IMR-90 (cell line): ENCODE measurements at regions of chrX and their contacts with region 1.

Region 1: DNA sequence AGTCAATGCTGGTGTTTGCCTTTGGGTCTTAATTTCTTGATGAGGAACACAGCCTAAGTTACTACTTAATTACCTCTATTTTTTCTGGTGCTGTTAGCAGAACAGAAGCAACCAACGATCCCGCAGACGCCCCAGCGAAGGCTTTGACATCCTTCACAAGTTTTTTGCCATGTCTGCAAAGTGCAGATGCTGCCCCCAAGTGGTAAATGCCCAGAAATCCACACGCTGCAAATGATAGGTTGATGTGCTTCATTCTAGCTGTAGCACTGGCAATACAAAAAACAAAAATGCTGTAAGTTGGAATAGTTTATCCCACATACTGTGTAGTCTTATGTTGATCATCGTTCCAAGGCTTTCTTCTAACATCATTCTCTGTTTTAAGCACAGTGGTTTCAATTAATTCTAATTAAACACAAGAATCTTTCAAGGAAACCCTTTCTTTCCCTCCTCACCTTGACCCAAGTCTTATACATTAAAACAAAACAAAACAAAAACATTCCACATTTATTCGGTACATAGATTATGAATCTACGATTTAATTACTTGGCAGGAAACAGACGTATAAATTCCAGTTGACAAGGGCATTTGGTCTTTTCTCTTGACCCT is 1.2 kb downstream of the PNPLA4 start:
- DNase-seq: peak; percentile 63
- ATAC-seq: peak; percentile 73
- H3K4me3 ChIP-seq: no peak overlapping the region
- H3K27ac ChIP-seq: no peak overlapping the region
- H3K4me1 ChIP-seq: no peaks in the 10 kb centered on the region
- H3K27me3 ChIP-seq: no peaks in the 10 kb centered on the region
- CTCF ChIP-seq: peak; percentile 69
- POLR2A ChIP-seq: no peak
- RAD21 ChIP-seq: peak; percentile 76

Region 2: GRCh38 chrX:6021316-6022091 is 1904.5 kb before region 1 on chrX:
- CTCF ChIA-PET with region 1: no interaction called
- POLR2A ChIA-PET with region 1: no interaction called
- dilution Hi-C with region 1: no loop called
- in situ Hi-C with region 1: no loop called
- intact Hi-C with region 1: loop called (anchors 5 kb)
- DNase-seq: peak; percentile 0
- ATAC-seq: no peak
- H3K4me3 ChIP-seq: no peak overlapping the region
- H3K27ac ChIP-seq: no peak overlapping the region
- H3K4me1 ChIP-seq: no peaks in the 10 kb centered on the region
- H3K27me3 ChIP-seq: no peaks in the 10 kb centered on the region
- CTCF ChIP-seq: peak; percentile 35; the same call in 1 of the 2 replicates
- POLR2A ChIP-seq: no peak
- RAD21 ChIP-seq: peak; percentile 40

Region 3: GRCh38 chrX:7074148-7074907 is 851.6 kb before region 1 on chrX:
- CTCF ChIA-PET with region 1: no interaction called
- POLR2A ChIA-PET with region 1: no interaction called
- dilution Hi-C with region 1: no loop called
- in situ Hi-C with region 1: no loop called
- intact Hi-C with region 1: loop called (anchors 10 kb)
- DNase-seq: no peak
- ATAC-seq: no peak
- H3K4me3 ChIP-seq: no peak overlapping the region
- H3K27ac ChIP-seq: no peak overlapping the region
- H3K4me1 ChIP-seq: no peaks in the 10 kb centered on the region
- H3K27me3 ChIP-seq: no peaks in the 10 kb centered on the region
- CTCF ChIP-seq: no peak
- POLR2A ChIP-seq: no peak
- RAD21 ChIP-seq: no peak

Region 4: GRCh38 chrX:7132335-7133049 is 793.5 kb before region 1 on chrX:
- CTCF ChIA-PET with region 1: no interaction called
- POLR2A ChIA-PET with region 1: no interaction called
- dilution Hi-C with region 1: no loop called
- in situ Hi-C with region 1: no loop called
- intact Hi-C with region 1: loop called (anchors 5 kb)
- DNase-seq: peak; percentile 73
- ATAC-seq: peak; percentile 89
- H3K4me3 ChIP-seq: no peak overlapping the region
- H3K27ac ChIP-seq: no peak overlapping the region
- H3K4me1 ChIP-seq: peaks cover 9% of the 10 kb centered on the region
- H3K27me3 ChIP-seq: no peaks in the 10 kb centered on the region
- CTCF ChIP-seq: peak; percentile 65
- POLR2A ChIP-seq: no peak
- RAD21 ChIP-seq: peak; percentile 64

Region 5: GRCh38 chrX:7191681-7192110 is 734.3 kb before region 1 on chrX:
- CTCF ChIA-PET with region 1: no interaction called
- POLR2A ChIA-PET with region 1: no interaction called
- dilution Hi-C with region 1: no loop called
- in situ Hi-C with region 1: no loop called
- intact Hi-C with region 1: loop called (anchors 5 kb)
- DNase-seq: peak; percentile 5
- ATAC-seq: no peak
- H3K4me3 ChIP-seq: no peak overlapping the region
- H3K27ac ChIP-seq: no peak overlapping the region
- H3K4me1 ChIP-seq: no peaks in the 10 kb centered on the region
- H3K27me3 ChIP-seq: no peaks in the 10 kb centered on the region
- CTCF ChIP-seq: peak; percentile 29
- POLR2A ChIP-seq: no peak
- RAD21 ChIP-seq: peak; percentile 27; the same call in 1 of the 2 replicates

Region 6: GRCh38 chrX:7233580-7234406 is 692.2 kb before region 1 on chrX:
- CTCF ChIA-PET with region 1: no interaction called
- POLR2A ChIA-PET with region 1: no interaction called
- dilution Hi-C with region 1: no loop called
- in situ Hi-C with region 1: no loop called
- intact Hi-C with region 1: loop called (anchors 5 kb)
- DNase-seq: no peak
- ATAC-seq: peak; percentile 29
- H3K4me3 ChIP-seq: no peak overlapping the region
- H3K27ac ChIP-seq: no peak overlapping the region
- H3K4me1 ChIP-seq: no peaks in the 10 kb centered on the region
- H3K27me3 ChIP-seq: no peaks in the 10 kb centered on the region
- CTCF ChIP-seq: peak; percentile 24; the same call in 1 of the 2 replicates
- POLR2A ChIP-seq: no peak
- RAD21 ChIP-seq: peak; percentile 24

Region 7: GRCh38 chrX:7654316-7654715 is 271.7 kb before region 1 on chrX:
- CTCF ChIA-PET with region 1: no interaction called
- POLR2A ChIA-PET with region 1: no interaction called
- dilution Hi-C with region 1: no loop called
- in situ Hi-C with region 1: no loop called
- intact Hi-C with region 1: no loop called
- DNase-seq: no peak
- ATAC-seq: no peak
- H3K4me3 ChIP-seq: no peak overlapping the region
- H3K27ac ChIP-seq: no peak overlapping the region
- H3K4me1 ChIP-seq: no peaks in the 10 kb centered on the region
- H3K27me3 ChIP-seq: no peaks in the 10 kb centered on the region
- CTCF ChIP-seq: no peak
- POLR2A ChIP-seq: no peak
- RAD21 ChIP-seq: no peak

Region 8: DNA sequence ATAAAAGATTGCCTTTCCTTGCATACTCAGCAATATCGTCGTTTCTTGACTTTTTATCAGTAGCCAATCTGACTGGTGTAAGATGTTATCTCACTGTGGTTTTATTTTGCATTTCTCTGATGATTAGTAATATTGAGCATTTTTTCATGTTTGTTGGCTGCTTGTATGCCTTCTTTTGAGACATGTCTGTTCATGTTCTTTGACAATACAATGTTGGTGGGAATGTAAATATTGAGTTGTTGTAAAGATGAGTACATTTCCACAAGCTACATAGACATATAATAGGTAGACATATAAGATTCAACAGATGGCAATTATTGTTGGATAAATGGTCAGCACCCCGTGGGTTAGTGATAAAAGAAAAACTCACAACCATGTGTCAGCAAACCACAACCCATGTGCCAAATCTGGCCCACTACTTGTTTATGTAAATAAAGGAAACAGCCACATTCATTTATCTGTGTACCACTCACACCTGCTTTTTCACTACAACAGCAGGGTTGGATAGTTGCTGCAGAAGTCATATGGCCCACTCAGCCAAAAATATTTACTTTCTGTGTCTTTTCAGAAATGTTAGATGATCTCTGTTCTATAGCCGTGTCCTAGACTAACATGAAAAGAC is 236.1 kb before region 1 on chrX:
- CTCF ChIA-PET with region 1: no interaction called
- POLR2A ChIA-PET with region 1: no interaction called
- dilution Hi-C with region 1: no loop called
- in situ Hi-C with region 1: no loop called
- intact Hi-C with region 1: no loop called
- DNase-seq: no peak
- ATAC-seq: no peak
- H3K4me3 ChIP-seq: no peak overlapping the region
- H3K27ac ChIP-seq: no peak overlapping the region
- H3K4me1 ChIP-seq: no peaks in the 10 kb centered on the region
- H3K27me3 ChIP-seq: no peaks in the 10 kb centered on the region
- CTCF ChIP-seq: no peak
- POLR2A ChIP-seq: no peak
- RAD21 ChIP-seq: no peak

Region 9: GRCh38 chrX:7746861-7747260 is 179.1 kb before region 1 on chrX:
- CTCF ChIA-PET with region 1: no interaction called
- POLR2A ChIA-PET with region 1: no interaction called
- dilution Hi-C with region 1: no loop called
- in situ Hi-C with region 1: no loop called
- intact Hi-C with region 1: no loop called
- DNase-seq: no peak
- ATAC-seq: no peak
- H3K4me3 ChIP-seq: no peak overlapping the region
- H3K27ac ChIP-seq: no peak overlapping the region
- H3K4me1 ChIP-seq: no peaks in the 10 kb centered on the region
- H3K27me3 ChIP-seq: no peaks in the 10 kb centered on the region
- CTCF ChIP-seq: no peak
- POLR2A ChIP-seq: no peak
- RAD21 ChIP-seq: no peak

Region 10: DNA sequence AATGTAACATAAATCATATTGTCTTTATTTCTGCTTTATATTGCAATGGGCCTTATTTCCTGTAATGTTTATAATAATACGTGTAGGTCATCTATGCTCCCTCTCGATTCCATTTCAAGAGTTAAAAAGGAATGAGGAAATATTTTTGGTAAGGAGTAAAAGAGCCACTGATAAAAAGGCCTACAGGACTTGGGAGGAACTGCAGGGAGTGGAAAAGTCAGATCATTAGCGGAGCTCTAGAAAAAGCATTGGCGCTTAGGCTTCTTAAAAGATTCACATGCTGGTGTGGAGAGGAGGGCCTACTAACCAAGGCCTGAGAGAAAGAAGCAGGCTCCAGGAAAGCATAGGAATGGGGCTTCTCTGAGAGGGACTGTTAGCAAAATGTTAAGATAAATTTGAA is 84.1 kb after region 1 on chrX:
- CTCF ChIA-PET with region 1: no interaction called
- POLR2A ChIA-PET with region 1: no interaction called
- dilution Hi-C with region 1: no loop called
- in situ Hi-C with region 1: no loop called
- intact Hi-C with region 1: no loop called
- DNase-seq: no peak
- ATAC-seq: no peak
- H3K4me3 ChIP-seq: no peak overlapping the region
- H3K27ac ChIP-seq: no peak overlapping the region
- H3K4me1 ChIP-seq: no peaks in the 10 kb centered on the region
- H3K27me3 ChIP-seq: no peaks in the 10 kb centered on the region
- CTCF ChIP-seq: no peak
- POLR2A ChIP-seq: no peak
- RAD21 ChIP-seq: no peak